Ovary (tissue), 10 donors: ENCODE measurements at regions of chr3 and their contacts with region 1.

Region 1: GRCh38 chr3:65902304-65902793 is 136.4 kb downstream of the MAGI1 start:
- DNase-seq: no peak
- H3K4me3 ChIP-seq: no peak overlapping the region
- H3K27ac ChIP-seq: no peak overlapping the region
- H3K4me1 ChIP-seq: peaks cover 7% of the 10 kb centered on the region
- H3K27me3 ChIP-seq: no peaks in the 10 kb centered on the region
- CTCF ChIP-seq: no peak
- EP300 ChIP-seq: no peak
- POLR2A ChIP-seq: no peak

Region 2: GRCh38 chr3:66055289-66055688 is 152.9 kb after region 1 on chr3:
- intact Hi-C with region 1: loop called in 1 of 4 experiments (anchors 5 kb)
- DNase-seq: no peak
- H3K4me3 ChIP-seq: no peak overlapping the region
- H3K27ac ChIP-seq: no peak overlapping the region
- H3K4me1 ChIP-seq: no peaks in the 10 kb centered on the region
- H3K27me3 ChIP-seq: no peaks in the 10 kb centered on the region
- CTCF ChIP-seq: no peak
- EP300 ChIP-seq: no peak
- POLR2A ChIP-seq: no peak